ENCODE measurements at regions of chr1 and their contacts with region 1.

Region 1: GRCh38 chr1:1406817-1407635 is at the start of gene MRPL20:
- DNase-seq: peak; percentile 88 to 96 (median 94)
- ATAC-seq: peak; percentile 97
- H3K4me3 ChIP-seq: peak within 1 kb of the TSS; percentile 89
- H3K4me3 Mint-ChIP-seq: peak within 1 kb of the TSS; percentile 83 to 96 (median 93)
- H3K27ac ChIP-seq: peak within 1 kb of the TSS; percentile 89
- H3K27ac Mint-ChIP-seq: peak within 1 kb of the TSS; percentile 90 to 97 (median 94)
- H3K4me1 ChIP-seq: peaks cover 19 to 20% of the 10 kb centered on the region in 2 donors
- H3K4me1 Mint-ChIP-seq: peaks cover 0 to 59% (median 35%) of the 10 kb centered on the region in 7 donors
- H3K27me3 ChIP-seq: no peaks in the 10 kb centered on the region
- H3K27me3 Mint-ChIP-seq: peaks cover 0 to 1% (median 0%) of the 10 kb centered on the region in 5 donors
- total RNA-seq, gene MRPL20: 91.2 to 135 (median 122) TPM

Region 2: GRCh38 chr1:1167398-1167821 is 239.6 kb before region 1 on chr1:
- CTCF ChIA-PET with region 1: no interaction called
- POLR2A ChIA-PET with region 1: no interaction called
- intact Hi-C with region 1: no loop called
- DNase-seq: no peak
- ATAC-seq: no peak
- H3K4me3 ChIP-seq: no peak overlapping the region
- H3K4me3 Mint-ChIP-seq: no peak overlapping the region
- H3K27ac ChIP-seq: no peak overlapping the region
- H3K27ac Mint-ChIP-seq: no peak overlapping the region
- H3K4me1 ChIP-seq: no peaks in the 10 kb centered on the region
- H3K4me1 Mint-ChIP-seq: peaks cover 5 to 12% (median 9%) of the 10 kb centered on the region in 7 donors
- H3K27me3 ChIP-seq: no peaks in the 10 kb centered on the region
- H3K27me3 Mint-ChIP-seq: peaks cover 0 to 11% (median 4%) of the 10 kb centered on the region in 5 donors

Region 3: DNA sequence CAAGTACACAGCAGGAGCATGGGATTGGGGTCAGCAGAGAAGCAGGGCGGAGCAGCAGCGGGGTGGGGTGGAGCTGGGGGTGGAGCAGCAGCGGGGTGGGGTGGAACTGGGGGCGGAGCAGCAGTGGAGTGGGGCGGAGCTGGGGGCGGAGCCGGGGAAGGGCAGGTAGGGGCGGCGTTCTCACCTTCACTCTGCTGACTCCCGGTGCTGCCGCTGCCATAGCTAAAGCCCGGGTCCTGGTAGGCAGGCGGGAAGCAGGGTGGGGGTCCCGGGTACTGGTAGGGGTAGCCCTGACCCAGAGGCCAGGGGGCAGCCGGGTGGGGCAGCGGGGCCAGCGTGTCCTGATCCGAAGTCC is 69.3 kb before region 1 on chr1:
- CTCF ChIA-PET with region 1: no interaction called
- POLR2A ChIA-PET with region 1: no interaction called
- intact Hi-C with region 1: no loop called
- DNase-seq: peak in 2 of 9 donors; percentile 31 to 62
- ATAC-seq: peak; percentile 60
- H3K4me3 ChIP-seq: no peak overlapping the region
- H3K4me3 Mint-ChIP-seq: no peak overlapping the region
- H3K27ac ChIP-seq: no peak overlapping the region
- H3K27ac Mint-ChIP-seq: no peak overlapping the region
- H3K4me1 ChIP-seq: no peaks in the 10 kb centered on the region
- H3K4me1 Mint-ChIP-seq: peaks cover 0 to 2% (median 0%) of the 10 kb centered on the region in 7 donors
- H3K27me3 ChIP-seq: no peaks in the 10 kb centered on the region
- H3K27me3 Mint-ChIP-seq: no peaks in the 10 kb centered on the region

Region 4: DNA sequence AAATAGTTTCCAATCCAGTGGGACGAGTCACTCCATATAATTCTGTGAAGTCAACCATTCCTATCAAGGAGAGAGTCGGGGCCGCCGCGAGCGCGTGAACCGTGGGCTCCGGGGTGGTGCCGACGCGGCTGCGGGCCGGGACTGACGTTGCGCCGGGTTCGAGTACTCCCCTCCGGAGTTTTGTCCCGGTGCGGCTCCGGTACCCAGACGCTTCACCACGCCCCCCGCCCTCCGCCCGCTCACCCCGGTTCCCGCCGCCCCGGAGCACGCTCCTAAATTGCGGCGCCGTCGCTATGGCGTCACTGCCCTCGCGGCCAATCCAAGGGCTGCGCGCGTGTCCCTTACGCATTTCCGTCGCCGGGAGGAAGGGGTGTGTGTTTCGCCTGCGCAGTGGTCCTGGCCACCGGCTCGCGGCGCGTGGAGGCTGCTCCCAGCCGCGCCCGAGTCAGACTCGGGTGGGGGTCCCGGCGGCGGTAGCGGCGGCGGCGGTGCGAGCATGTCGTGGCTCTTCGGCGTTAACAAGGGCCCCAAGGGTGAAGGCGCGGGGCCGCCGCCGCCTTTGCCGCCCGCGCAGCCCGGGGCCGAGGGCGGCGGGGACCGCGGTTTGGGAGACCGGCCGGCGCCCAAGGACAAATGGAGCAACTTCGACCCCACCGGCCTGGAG is 64.5 kb after region 1 on chr1 and contains the start of gene ATAD3B:
- CTCF ChIA-PET with region 1: no interaction called
- POLR2A ChIA-PET with region 1: no interaction called
- intact Hi-C with region 1: loop called in 1 of 2 experiments (anchors 2 kb)
- DNase-seq: peak; percentile 80 to 95 (median 88)
- ATAC-seq: peak; percentile 98
- H3K4me3 ChIP-seq: peak within 1 kb of the TSS; percentile 68
- H3K4me3 Mint-ChIP-seq: peak within 1 kb of the TSS; percentile 78 to 97 (median 89)
- H3K27ac ChIP-seq: peak within 1 kb of the TSS; percentile 90
- H3K27ac Mint-ChIP-seq: peak within 1 kb of the TSS; percentile 77 to 98 (median 92)
- H3K4me1 ChIP-seq: peaks cover 9 to 14% of the 10 kb centered on the region in 2 donors
- H3K4me1 Mint-ChIP-seq: peaks cover 6 to 39% (median 25%) of the 10 kb centered on the region in 7 donors
- H3K27me3 ChIP-seq: no peaks in the 10 kb centered on the region
- H3K27me3 Mint-ChIP-seq: no peaks in the 10 kb centered on the region
- total RNA-seq, gene ATAD3B: 42.5 to 53.8 (median 51.7) TPM